CD4-positive, alpha-beta T cell (primary cell): ENCODE measurements at regions of chr19 and their contacts with region 1.

Region 1: GRCh38 chr19:29671393-29672160 is 6.3 kb downstream of the PLEKHF1 start:
- DNase-seq: peak; percentile 73 to 94 (median 89)
- ATAC-seq: peak; percentile 63
- H3K4me3 ChIP-seq: peak overlapping the region; percentile 30
- H3K4me3 Mint-ChIP-seq: peak overlapping the region; percentile 68
- H3K27ac ChIP-seq: peak overlapping the region; percentile 78 to 86
- H3K27ac Mint-ChIP-seq: peak overlapping the region; percentile 98
- H3K4me1 ChIP-seq: peaks cover 98% of the 10 kb centered on the region
- H3K4me1 Mint-ChIP-seq: peaks cover 88% of the 10 kb centered on the region
- H3K27me3 ChIP-seq: no peaks in the 10 kb centered on the region
- H3K27me3 Mint-ChIP-seq: no peaks in the 10 kb centered on the region
- CTCF ChIP-seq: peak; percentile 56

Region 2: GRCh38 chr19:29302002-29302928 is 369.3 kb before region 1 on chr19:
- CTCF ChIA-PET with region 1: no interaction called
- POLR2A ChIA-PET with region 1: no interaction called
- intact Hi-C with region 1: no loop called
- DNase-seq: peak in 1 of 14 experiments; percentile 42
- ATAC-seq: no peak
- H3K4me3 ChIP-seq: no peak overlapping the region
- H3K4me3 Mint-ChIP-seq: no peak overlapping the region
- H3K27ac ChIP-seq: no peak overlapping the region
- H3K27ac Mint-ChIP-seq: no peak overlapping the region
- H3K4me1 ChIP-seq: no peaks in the 10 kb centered on the region
- H3K4me1 Mint-ChIP-seq: no peaks in the 10 kb centered on the region
- H3K27me3 ChIP-seq: no peaks in the 10 kb centered on the region
- H3K27me3 Mint-ChIP-seq: peaks cover 29% of the 10 kb centered on the region
- CTCF ChIP-seq: no peak

Region 3: DNA sequence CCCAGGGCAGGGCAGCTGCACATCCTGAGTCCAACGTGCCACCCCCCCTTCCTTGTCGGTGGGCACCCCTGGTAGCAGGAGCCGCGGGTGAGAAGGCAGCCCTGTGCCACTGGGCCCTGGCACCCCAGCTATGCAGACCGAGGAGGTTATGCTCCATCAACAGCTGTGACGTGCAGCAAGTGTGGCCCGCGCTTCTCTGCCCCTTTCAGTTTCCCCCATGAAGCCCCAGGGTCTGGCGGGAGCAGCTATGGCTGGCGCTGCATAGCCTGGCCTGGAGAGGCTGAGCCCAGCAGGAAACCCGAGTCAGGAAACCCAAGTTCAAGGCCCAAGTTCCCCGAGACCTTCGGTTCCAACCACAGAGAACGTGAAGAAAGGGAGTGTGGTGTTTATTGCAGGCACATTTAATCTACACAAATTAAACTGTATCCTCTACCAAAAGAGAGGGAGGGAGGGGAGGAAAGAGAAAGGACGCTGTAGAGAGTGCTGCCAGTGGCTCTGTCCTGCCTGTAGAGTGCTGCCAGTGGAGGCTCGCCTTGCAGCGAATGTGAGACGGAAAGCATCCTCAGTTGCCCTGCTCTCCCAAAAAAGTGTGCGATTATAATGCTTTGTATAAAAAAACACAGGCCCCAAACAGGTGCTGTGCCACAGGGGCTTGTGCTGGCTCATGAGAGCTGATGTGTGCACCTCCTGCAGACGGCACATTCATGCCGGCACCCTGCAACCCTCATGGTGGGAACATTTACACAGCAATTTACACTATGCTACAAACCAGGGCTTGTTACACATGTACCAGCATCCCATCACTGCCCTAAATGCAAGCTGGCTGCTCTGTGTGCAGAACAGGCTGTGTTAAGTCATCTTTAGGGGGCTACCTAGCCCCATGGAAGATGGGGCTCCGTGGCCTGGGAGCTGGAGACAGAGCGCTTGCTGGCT is 49.2 kb before region 1 on chr19:
- CTCF ChIA-PET with region 1: no interaction called
- POLR2A ChIA-PET with region 1: interaction called, 13 read pairs
- intact Hi-C with region 1: no loop called
- DNase-seq: peak in 8 of 14 experiments; percentile 2 to 59 (median 34)
- ATAC-seq: peak; percentile 81
- H3K4me3 ChIP-seq: no peak overlapping the region
- H3K4me3 Mint-ChIP-seq: peak overlapping the region; percentile 52
- H3K27ac ChIP-seq: peak overlapping the region; percentile 26 to 38
- H3K27ac Mint-ChIP-seq: peak overlapping the region; percentile 75
- H3K4me1 ChIP-seq: peaks cover 55% of the 10 kb centered on the region
- H3K4me1 Mint-ChIP-seq: peaks cover 43% of the 10 kb centered on the region
- H3K27me3 ChIP-seq: no peaks in the 10 kb centered on the region
- H3K27me3 Mint-ChIP-seq: no peaks in the 10 kb centered on the region
- CTCF ChIP-seq: no peak

Region 4: GRCh38 chr19:29694669-29695627 is 23.4 kb after region 1 on chr19:
- CTCF ChIA-PET with region 1: interaction called, 21 read pairs
- POLR2A ChIA-PET with region 1: interaction called, 4 read pairs
- intact Hi-C with region 1: loop called in 1 of 2 experiments (anchors 1 kb)
- DNase-seq: peak; percentile 73 to 90 (median 80)
- ATAC-seq: peak; percentile 95
- H3K4me3 ChIP-seq: no peak overlapping the region
- H3K4me3 Mint-ChIP-seq: no peak overlapping the region
- H3K27ac ChIP-seq: no peak overlapping the region
- H3K27ac Mint-ChIP-seq: peak overlapping the region; percentile 61
- H3K4me1 ChIP-seq: peaks cover 24% of the 10 kb centered on the region
- H3K4me1 Mint-ChIP-seq: peaks cover 18% of the 10 kb centered on the region
- H3K27me3 ChIP-seq: no peaks in the 10 kb centered on the region
- H3K27me3 Mint-ChIP-seq: no peaks in the 10 kb centered on the region
- CTCF ChIP-seq: peak; percentile 92